ENCODE measurements at regions of chrX and their contacts with region 1.

Region 1: DNA sequence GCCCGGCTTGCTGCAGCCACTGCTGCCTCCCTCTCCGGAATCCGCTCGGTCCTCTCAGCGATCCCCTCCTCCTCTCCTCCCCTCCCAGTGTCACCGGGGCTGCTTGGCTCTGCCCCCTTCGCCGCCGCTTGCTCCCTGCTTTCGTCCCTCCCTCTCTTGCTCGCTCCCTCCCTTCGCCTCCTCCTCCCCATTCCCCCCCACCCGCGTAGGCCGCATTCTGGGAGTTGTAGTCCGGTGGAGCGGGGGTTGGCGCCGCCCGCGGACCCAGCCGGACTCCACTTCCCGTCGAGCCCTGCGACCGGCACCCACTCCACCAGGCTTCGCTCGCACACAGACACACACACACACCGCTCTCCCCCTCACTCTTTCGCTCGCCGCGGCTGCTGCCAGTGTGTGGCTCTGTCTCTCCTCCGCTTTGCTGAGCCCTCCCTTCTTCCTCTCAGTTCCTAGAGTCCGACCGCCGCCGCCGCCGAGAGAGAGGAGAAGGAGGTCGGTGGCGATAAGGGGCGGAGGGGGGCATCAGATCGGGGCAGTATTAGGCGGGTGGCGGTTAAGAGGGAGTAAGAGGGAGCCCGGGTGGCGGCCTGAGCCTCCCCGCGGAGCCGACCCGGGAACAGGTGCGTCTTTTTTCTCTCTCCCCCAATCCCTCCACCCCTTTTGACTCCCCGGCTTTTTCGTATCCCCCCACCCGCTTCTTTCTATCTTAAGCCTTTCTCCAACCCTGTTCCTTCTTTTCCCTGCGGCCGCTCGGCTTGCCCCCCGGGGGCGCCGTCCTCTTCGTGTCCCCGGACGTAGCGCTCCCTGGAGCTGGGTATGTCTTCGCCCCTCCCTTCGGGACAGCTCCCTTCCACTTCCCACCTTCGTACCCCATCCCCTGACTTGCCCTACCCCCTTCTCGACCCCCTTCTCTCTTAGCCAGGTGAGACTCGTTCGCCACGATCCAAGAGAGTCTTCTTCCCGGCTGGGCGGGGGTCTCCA is at the start of gene BCORL1:
- DNase-seq: peak; percentile 66
- ATAC-seq: peak; percentile 93
- H3K4me3 ChIP-seq: peak within 1 kb of the TSS; percentile 63; the same call in 1 of the 2 replicates
- H3K27ac ChIP-seq: no peak within 1 kb of the TSS
- H3K4me1 ChIP-seq: peaks cover 5% of the 10 kb centered on the region; the same call in 1 of the 2 replicates
- H3K27me3 ChIP-seq: no peaks in the 10 kb centered on the region
- CTCF ChIP-seq: no peak
- EP300 ChIP-seq: no peak
- POLR2A ChIP-seq: peak; percentile 94
- RAD21 ChIP-seq: no peak
- polyA plus RNA-seq, gene BCORL1: 0.16 to 0.22 TPM

Region 2: DNA sequence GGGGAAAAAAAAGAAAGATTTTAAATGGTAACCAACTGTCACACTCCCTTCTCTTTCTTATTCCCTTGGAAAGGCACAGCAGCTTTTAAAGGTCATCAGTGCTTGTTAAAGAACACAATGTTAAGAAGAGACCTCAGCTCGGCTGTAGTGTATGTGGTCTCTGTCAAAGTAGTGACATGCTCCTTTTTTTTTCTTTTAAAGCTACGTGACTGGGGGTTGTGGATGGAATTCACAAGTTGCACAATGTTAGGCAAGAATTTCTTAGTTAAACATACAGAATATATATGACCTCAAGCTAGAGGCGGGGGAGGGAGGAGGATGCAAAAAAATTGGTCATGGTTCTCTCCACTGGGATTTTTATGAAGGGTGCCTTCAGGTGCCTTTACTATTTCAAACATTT is 396.9 kb before region 1 on chrX:
- CTCF ChIA-PET with region 1: no interaction called
- POLR2A ChIA-PET with region 1: no interaction called
- RAD21 ChIA-PET with region 1: no interaction called
- SMC1A ChIA-PET with region 1: no interaction called
- in situ Hi-C with region 1: no loop called
- intact Hi-C with region 1: no loop called
- DNase-seq: no peak
- ATAC-seq: no peak
- H3K4me3 ChIP-seq: no peak overlapping the region
- H3K27ac ChIP-seq: no peak overlapping the region
- H3K4me1 ChIP-seq: no peaks in the 10 kb centered on the region
- H3K27me3 ChIP-seq: no peaks in the 10 kb centered on the region
- CTCF ChIP-seq: no peak
- EP300 ChIP-seq: no peak
- POLR2A ChIP-seq: no peak
- RAD21 ChIP-seq: no peak

Region 3: DNA sequence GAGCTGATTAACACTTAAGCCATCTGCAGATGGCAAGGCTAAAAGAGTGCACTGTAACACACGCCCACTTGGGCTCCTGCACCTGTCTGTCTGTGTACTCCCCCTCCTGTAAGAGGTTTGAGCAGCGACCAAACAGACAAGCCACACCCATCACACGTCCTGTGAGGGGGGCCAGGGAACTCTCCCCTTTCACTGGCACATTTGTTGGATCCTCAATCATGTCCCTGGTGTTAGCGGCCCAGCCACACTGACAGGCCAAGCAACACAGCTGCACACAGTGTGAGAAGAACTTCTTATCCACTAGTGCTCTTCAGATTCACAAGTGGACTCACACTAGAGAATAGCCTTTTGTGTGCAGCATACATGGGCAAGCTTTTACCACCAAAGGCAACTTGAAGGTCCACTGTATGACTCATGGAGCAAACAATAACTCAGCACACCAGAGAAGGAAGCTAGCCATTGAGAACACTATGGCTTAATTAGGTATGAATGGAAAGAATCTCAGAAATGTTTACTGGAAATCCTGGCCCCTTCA is 105.7 kb before region 1 on chrX:
- CTCF ChIA-PET with region 1: no interaction called
- POLR2A ChIA-PET with region 1: no interaction called
- RAD21 ChIA-PET with region 1: no interaction called
- SMC1A ChIA-PET with region 1: no interaction called
- in situ Hi-C with region 1: no loop called
- intact Hi-C with region 1: no loop called
- DNase-seq: no peak
- ATAC-seq: no peak
- H3K4me3 ChIP-seq: no peak overlapping the region
- H3K27ac ChIP-seq: no peak overlapping the region
- H3K4me1 ChIP-seq: no peaks in the 10 kb centered on the region
- H3K27me3 ChIP-seq: no peaks in the 10 kb centered on the region; a peak in 1 of 4 replicates
- CTCF ChIP-seq: no peak
- EP300 ChIP-seq: no peak
- POLR2A ChIP-seq: no peak
- RAD21 ChIP-seq: no peak

Region 4: DNA sequence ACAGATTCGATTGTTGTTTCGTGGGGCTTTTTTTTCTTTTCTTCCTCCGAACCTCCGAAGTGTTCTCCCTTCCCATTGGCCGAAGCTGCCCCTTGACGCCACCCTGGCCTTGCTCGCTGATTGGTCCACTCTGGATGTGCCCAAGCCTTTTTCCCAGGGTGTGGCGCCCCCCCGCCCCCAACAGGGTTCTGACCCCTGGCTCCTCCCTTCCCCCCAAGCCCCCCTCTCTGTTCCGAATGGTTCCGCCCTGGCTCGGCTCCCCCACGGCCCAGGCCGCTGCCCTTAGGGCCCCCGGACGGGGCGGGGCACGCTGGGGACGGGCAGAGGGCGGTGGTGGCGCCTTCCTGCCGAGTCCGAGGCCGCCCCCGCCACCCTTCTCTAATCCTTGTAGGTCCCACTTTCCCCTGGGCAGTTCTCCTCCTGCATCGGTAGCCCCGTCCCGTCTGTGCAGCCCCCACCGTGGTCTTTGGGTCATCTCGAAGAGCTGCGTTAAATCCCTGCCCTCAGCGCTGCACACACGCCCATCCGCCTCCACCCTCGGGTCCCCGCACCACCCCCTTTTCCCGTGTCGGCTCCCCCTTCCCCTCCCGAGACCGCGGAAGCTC is 51.0 kb before region 1 on chrX:
- CTCF ChIA-PET with region 1: no interaction called
- POLR2A ChIA-PET with region 1: interaction called, 4 read pairs
- RAD21 ChIA-PET with region 1: no interaction called
- SMC1A ChIA-PET with region 1: no interaction called
- in situ Hi-C with region 1: no loop called
- intact Hi-C with region 1: loop called (anchors 1 kb)
- DNase-seq: peak; percentile 55
- ATAC-seq: peak; percentile 89
- H3K4me3 ChIP-seq: peak overlapping the region; percentile 67; the same call in 1 of the 2 replicates
- H3K27ac ChIP-seq: peak overlapping the region; percentile 65; the same call in 1 of the 2 replicates
- H3K4me1 ChIP-seq: no peaks in the 10 kb centered on the region
- H3K27me3 ChIP-seq: no peaks in the 10 kb centered on the region
- CTCF ChIP-seq: no peak
- EP300 ChIP-seq: no peak
- POLR2A ChIP-seq: peak; percentile 49; the same call in 1 of the 2 replicates
- RAD21 ChIP-seq: no peak

Region 5: DNA sequence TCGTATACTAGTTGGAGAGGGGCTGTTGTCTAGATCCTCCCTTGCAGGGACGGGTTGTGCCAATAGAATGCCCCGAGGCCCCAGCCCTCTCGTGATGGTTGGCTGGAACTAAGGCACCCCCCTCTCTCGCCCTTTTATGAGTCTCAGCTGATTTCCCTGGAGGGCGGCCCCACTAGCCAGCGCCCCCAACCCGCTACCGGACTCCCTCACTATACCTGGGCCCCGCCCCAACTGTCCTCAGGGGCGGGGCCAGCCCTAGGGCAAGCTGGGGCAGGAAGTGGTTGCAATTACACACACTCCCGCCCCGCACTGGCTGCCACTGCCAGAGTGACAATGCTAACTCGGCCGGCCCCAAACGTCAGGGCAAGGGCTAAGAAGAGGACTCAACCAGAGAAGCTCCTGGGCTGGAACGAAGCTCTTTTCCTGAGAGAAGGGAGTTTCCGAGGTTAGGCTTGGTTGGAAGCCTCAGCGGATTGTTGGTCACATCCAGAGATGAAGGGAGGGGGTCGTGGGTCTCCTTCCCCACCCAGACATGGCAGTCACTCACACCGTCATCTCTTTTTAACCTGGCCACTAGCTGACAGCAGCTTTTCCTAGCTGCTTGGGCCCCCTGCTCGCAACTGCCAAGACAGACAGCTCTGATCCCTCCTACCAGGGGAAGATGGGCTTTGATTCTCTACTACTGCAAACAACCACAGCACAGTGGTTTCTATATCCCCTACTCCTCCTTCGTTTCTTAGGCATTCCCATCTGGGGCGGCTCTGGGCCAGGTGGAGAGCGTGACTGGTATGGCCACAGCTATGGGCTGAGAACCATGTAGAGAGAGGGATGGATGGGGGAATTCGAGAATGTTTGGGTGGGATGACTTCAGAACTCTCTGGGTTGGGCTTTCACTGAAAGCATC is 21.1 kb before region 1 on chrX:
- CTCF ChIA-PET with region 1: interaction called, 3 read pairs
- POLR2A ChIA-PET with region 1: no interaction called
- RAD21 ChIA-PET with region 1: interaction called, 3 read pairs
- SMC1A ChIA-PET with region 1: no interaction called
- in situ Hi-C with region 1: no loop called
- intact Hi-C with region 1: loop called (anchors 2 kb)
- DNase-seq: peak; percentile 17
- ATAC-seq: peak; percentile 92
- H3K4me3 ChIP-seq: peak overlapping the region; percentile 37; the same call in 1 of the 2 replicates
- H3K27ac ChIP-seq: no peak overlapping the region
- H3K4me1 ChIP-seq: peaks cover 7% of the 10 kb centered on the region
- H3K27me3 ChIP-seq: no peaks in the 10 kb centered on the region
- CTCF ChIP-seq: no peak
- EP300 ChIP-seq: no peak
- POLR2A ChIP-seq: peak; percentile 78
- RAD21 ChIP-seq: no peak

Region 6: DNA sequence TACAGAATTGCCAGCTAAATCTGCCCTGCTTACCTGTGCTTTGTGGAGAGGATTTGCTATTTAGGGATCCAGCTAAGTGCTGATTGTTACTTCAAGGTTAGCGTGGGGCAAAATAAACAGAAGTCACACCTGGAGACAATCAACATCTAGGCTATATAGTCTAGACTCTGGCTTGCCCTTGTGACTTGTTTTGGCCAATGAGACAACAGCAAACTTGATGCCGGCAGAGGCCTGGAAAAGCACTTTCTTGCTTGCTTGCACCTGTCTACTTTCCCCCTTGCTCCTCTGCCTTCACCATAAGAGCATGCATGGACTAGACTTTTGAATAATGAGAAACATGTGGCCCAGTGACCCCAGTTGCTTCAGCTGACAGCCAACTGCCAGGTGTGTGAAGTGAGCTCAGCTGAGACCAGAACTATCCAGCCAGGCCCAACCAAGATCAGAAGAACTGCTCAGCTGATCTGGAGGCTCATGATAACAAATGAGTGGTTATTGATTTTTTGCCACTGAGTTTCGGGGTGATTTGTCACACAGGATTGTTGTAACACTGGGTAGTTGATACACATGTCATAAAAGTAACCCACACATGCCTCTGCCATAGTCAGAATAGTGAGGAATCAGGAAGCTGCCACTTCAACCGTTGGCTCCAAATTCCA is 583.6 kb after region 1 on chrX:
- CTCF ChIA-PET with region 1: no interaction called
- POLR2A ChIA-PET with region 1: no interaction called
- RAD21 ChIA-PET with region 1: no interaction called
- SMC1A ChIA-PET with region 1: no interaction called
- in situ Hi-C with region 1: no loop called
- intact Hi-C with region 1: no loop called
- DNase-seq: no peak
- ATAC-seq: no peak
- H3K4me3 ChIP-seq: no peak overlapping the region
- H3K27ac ChIP-seq: no peak overlapping the region
- H3K4me1 ChIP-seq: no peaks in the 10 kb centered on the region
- H3K27me3 ChIP-seq: no peaks in the 10 kb centered on the region
- CTCF ChIP-seq: no peak
- EP300 ChIP-seq: no peak
- POLR2A ChIP-seq: no peak
- RAD21 ChIP-seq: no peak